Gastrocnemius medialis (tissue), 4 donors: ENCODE measurements at regions of chr16 and their contacts with region 1.

Region 1: GRCh38 chr16:25111403-25112166 is at the start of gene LCMT1:
- DNase-seq: peak; percentile 92 to 96
- ATAC-seq: peak; percentile 91 to 97
- H3K4me3 ChIP-seq: peak within 1 kb of the TSS; percentile 71 to 93 (median 89)
- H3K27ac ChIP-seq: peak within 1 kb of the TSS; percentile 84 to 96 (median 90)
- H3K4me1 ChIP-seq: peaks cover 36% of the 10 kb centered on the region in 2 donors
- H3K27me3 ChIP-seq: no peaks in the 10 kb centered on the region
- CTCF ChIP-seq: no peak
- POLR2A ChIP-seq: peak; percentile 68 to 71
- total RNA-seq, gene LCMT1: 49.8 to 90.6 (median 59.3) TPM

Region 2: DNA sequence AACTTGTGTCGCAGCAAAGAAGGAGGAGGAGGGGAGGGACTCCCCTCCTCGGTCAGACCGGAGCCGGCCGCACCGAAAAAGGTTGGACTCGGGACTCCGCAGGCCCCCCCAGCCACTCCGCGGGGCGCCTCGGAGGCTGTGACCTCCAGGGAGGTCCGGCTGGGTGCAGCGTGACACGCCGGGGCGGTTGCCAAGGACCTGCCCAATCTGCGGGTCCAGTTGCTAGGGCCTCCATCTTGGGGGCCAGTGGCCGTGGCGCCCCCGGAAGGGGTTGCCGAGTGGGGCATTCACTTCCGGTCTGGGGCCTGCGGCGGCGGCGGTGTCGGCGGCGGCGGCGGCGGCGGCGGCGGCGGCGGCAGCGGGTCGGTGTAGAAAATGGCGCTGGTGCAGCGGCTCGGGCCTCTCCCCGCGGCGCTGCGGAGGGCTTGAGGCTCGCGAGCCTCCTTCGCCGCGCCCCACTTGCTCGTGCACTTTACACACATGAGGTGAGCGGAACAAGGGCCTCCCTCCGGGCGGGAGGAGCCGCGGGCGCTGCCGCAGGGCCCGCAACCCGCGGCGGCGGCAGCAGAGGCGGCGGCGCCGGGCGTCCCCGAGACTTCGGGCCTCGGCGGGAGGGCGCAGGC is 382.1 kb before region 1 on chr16 and contains the start of gene TNRC6A:
- in situ Hi-C with region 1: no loop called
- intact Hi-C with region 1: loop called (anchors 2 kb)
- DNase-seq: peak; percentile 85 to 92
- ATAC-seq: peak; percentile 91 to 92
- H3K4me3 ChIP-seq: peak within 1 kb of the TSS; percentile 57 to 92 (median 77)
- H3K27ac ChIP-seq: peak within 1 kb of the TSS; percentile 81 to 94 (median 89)
- H3K4me1 ChIP-seq: peaks cover 40 to 43% of the 10 kb centered on the region in 2 donors
- H3K27me3 ChIP-seq: no peaks in the 10 kb centered on the region
- CTCF ChIP-seq: no peak
- POLR2A ChIP-seq: peak; percentile 81 to 87
- total RNA-seq, gene TNRC6A: 16.9 to 26.0 (median 23.1) TPM

Region 3: GRCh38 chr16:25031441-25032307 is 79.9 kb before region 1 on chr16:
- in situ Hi-C with region 1: no loop called
- intact Hi-C with region 1: loop called (anchors 1 kb)
- DNase-seq: peak; percentile 91 to 93
- ATAC-seq: peak; percentile 99 to 100
- H3K4me3 ChIP-seq: peak overlapping the region; percentile 73 to 85 (median 80)
- H3K27ac ChIP-seq: peak overlapping the region; percentile 75 to 88 (median 82)
- H3K4me1 ChIP-seq: peaks cover 8 to 11% of the 10 kb centered on the region in 2 donors
- H3K27me3 ChIP-seq: no peaks in the 10 kb centered on the region
- CTCF ChIP-seq: peak in 1 of 5 experiments; percentile 13
- POLR2A ChIP-seq: peak; percentile 63

Region 4: GRCh38 chr16:25060920-25061319 is 50.7 kb before region 1 on chr16:
- in situ Hi-C with region 1: loop called in 2 of 4 experiments (anchors 5 to 10 kb)
- intact Hi-C with region 1: loop called (anchors 1 kb)
- DNase-seq: no peak
- ATAC-seq: no peak
- H3K4me3 ChIP-seq: no peak overlapping the region
- H3K27ac ChIP-seq: no peak overlapping the region
- H3K4me1 ChIP-seq: peaks cover 4 to 7% of the 10 kb centered on the region in 2 donors
- H3K27me3 ChIP-seq: no peaks in the 10 kb centered on the region
- CTCF ChIP-seq: no peak
- POLR2A ChIP-seq: no peak

Region 5: GRCh38 chr16:25257504-25257955 is 145.9 kb after region 1 on chr16 and contains the start of gene ZKSCAN2:
- in situ Hi-C with region 1: no loop called
- intact Hi-C with region 1: loop called (anchors 5 kb)
- DNase-seq: peak; percentile 86 to 87
- ATAC-seq: peak; percentile 83 to 90
- H3K4me3 ChIP-seq: peak within 1 kb of the TSS; percentile 79 to 93 (median 90)
- H3K27ac ChIP-seq: peak within 1 kb of the TSS; percentile 90 to 99 (median 98)
- H3K4me1 ChIP-seq: peaks cover 36 to 49% of the 10 kb centered on the region in 2 donors
- H3K27me3 ChIP-seq: no peaks in the 10 kb centered on the region
- CTCF ChIP-seq: no peak
- POLR2A ChIP-seq: peak; percentile 95 to 96
- total RNA-seq, gene ZKSCAN2: 2.9 to 6.9 (median 5.2) TPM